Vagina (tissue), 2 donors: ENCODE measurements at regions of chr19 and their contacts with region 1.

Region 1: GRCh38 chr19:2719910-2720776 is 1.0 kb downstream of the DIRAS1 start:
- DNase-seq: no peak
- H3K4me3 ChIP-seq: peak overlapping the region; percentile 38 to 44
- H3K27ac ChIP-seq: peak overlapping the region; percentile 30
- H3K4me1 ChIP-seq: peaks cover 37% of the 10 kb centered on the region
- H3K27me3 ChIP-seq: no peaks in the 10 kb centered on the region
- CTCF ChIP-seq: no peak
- POLR2A ChIP-seq: no peak

Region 2: DNA sequence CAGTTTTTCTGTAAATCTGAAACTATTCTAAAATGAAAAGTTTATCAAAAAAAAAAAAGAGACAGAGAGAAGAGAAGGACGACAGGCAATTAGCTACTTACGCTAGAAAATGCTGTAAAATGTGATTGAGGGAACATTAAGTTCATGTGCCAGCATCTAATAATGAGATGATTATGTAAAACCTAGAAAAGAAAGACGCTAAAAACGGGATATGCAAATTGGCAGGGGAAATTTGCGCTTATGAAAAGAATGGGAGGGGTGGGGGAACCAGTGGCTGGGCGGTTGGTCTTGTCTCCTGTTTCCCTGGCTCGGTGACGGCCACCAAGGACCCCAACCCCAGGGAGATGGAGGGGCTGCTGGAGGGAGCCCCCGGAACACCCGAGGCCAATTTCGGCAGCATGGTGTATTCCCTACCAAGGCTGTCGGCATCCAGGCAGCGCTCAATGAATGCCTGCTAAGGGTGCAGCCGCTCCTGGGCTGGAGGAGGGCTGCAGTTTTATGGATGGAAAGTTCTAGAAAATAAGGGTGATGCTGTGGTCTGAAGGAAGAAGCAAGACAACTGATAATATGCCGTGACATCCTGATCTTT is 51.9 kb before region 1 on chr19:
- intact Hi-C with region 1: loop called (anchors 5 kb)
- DNase-seq: no peak
- H3K4me3 ChIP-seq: no peak overlapping the region
- H3K27ac ChIP-seq: no peak overlapping the region
- H3K4me1 ChIP-seq: no peaks in the 10 kb centered on the region
- H3K27me3 ChIP-seq: no peaks in the 10 kb centered on the region
- CTCF ChIP-seq: no peak
- POLR2A ChIP-seq: no peak